ENCODE measurements at regions of chr2 and their contacts with region 1.

Region 1: DNA sequence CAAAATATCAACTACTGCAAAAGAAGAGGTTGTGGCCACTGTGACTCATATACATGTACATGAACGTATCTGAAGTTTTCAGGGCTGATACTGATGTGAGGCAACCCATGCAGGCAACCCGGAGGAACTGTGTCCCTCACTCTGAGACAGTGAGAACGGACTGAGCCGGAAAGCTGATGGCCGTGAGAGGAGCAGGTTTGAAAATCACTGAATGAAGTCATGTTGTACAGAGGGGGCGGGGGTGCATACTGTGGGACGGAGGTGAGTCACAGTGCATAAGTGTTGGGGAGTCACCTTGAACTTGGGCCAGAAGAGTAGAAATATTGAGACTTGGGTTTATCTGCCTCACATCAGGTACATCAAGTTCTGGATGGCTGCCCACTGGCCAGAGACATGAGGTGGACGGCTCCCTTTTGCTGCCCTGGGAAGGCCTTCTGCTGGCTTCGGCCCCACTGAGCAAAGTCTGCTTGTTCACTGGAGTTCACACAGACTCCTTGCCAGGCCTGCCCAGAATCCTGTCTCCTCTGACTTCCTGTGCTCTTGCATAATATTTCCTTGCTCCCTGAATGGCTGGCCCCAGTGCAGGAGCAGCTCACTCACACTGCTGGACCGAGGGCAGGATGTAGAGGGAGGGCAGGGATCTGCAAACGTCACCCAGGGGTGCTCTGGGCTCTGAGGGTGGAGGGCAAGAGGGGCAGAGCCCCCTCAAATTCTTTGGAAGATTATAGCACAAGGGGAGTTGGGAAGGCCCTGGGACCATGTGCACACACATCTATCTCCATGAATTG is 18.1 kb downstream of the EPAS1 start:
- DNase-seq: peak; percentile 85 to 98
- H3K4me3 ChIP-seq: no peak overlapping the region
- H3K27ac ChIP-seq: peak overlapping the region; percentile 94 to 95
- H3K4me1 ChIP-seq: peaks cover 25 to 68% of the 10 kb centered on the region in 2 donors
- H3K27me3 ChIP-seq: no peaks in the 10 kb centered on the region
- CTCF ChIP-seq: no peak

Region 2: DNA sequence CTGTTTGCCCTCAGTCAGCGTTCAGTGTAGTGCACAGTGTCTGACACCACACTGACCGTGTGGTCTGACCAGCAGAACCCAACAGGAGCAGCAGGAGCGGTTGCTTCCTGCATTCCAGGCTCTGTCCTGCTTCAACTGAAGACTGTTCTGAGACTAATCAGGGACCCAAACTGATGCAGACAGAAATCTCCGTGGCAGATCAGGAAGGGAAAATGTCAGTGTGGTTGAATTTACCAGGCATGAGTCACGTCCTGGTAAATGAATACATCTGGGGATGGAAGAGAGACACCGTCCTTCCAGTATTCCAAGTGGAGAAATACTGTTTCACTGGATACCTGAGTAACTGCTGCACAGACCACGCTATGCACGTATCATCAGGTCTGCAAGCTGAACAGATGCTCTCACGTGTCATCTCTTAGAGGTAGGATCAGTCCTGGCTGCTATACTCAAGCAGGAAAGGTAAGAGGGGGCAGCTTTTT is 241.7 kb before region 1 on chr2:
- intact Hi-C with region 1: no loop called
- DNase-seq: no peak
- H3K4me3 ChIP-seq: no peak overlapping the region
- H3K27ac ChIP-seq: no peak overlapping the region
- H3K4me1 ChIP-seq: no peaks in the 10 kb centered on the region
- H3K27me3 ChIP-seq: no peaks in the 10 kb centered on the region
- CTCF ChIP-seq: no peak

Region 3: DNA sequence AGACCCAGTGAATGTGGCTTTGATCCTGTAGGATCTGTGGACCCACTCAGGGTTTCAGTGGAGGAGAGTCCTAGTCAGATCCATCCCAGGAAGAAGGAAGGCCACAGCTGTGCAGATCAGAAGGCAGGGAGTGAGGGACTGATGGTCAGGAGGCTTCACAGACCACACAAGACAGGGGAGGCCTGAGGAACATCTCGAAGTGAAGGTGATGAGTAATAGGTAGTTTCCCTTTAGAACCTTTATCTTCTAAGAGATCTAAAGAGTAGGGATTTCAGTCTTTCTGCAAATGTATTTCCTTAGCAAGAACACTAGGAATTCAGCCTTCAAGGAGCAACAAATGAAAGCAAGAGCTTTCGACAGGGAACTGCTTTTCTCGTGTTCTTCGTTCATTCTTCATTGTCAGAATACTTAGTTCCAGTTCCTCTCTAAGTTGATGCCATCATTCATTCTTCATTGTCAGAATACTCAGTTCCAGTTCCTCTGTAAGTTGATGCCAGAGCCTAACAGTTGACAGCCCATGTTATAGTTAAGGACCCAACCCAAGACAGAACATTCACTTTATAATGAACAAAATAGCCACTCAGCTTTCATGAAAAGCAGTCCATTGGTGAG is 168.3 kb before region 1 on chr2:
- intact Hi-C with region 1: no loop called
- DNase-seq: no peak
- H3K4me3 ChIP-seq: no peak overlapping the region
- H3K27ac ChIP-seq: no peak overlapping the region
- H3K4me1 ChIP-seq: peaks cover 0 to 4% of the 10 kb centered on the region in 2 donors
- H3K27me3 ChIP-seq: no peaks in the 10 kb centered on the region
- CTCF ChIP-seq: no peak

Region 4: GRCh38 chr2:46329803-46330775 is 14.8 kb after region 1 on chr2:
- intact Hi-C with region 1: loop called (anchors 1 kb)
- DNase-seq: no peak
- H3K4me3 ChIP-seq: no peak overlapping the region
- H3K27ac ChIP-seq: peak overlapping the region; percentile 86 to 92
- H3K4me1 ChIP-seq: peaks cover 16 to 76% of the 10 kb centered on the region in 2 donors
- H3K27me3 ChIP-seq: no peaks in the 10 kb centered on the region
- CTCF ChIP-seq: no peak

Region 5: DNA sequence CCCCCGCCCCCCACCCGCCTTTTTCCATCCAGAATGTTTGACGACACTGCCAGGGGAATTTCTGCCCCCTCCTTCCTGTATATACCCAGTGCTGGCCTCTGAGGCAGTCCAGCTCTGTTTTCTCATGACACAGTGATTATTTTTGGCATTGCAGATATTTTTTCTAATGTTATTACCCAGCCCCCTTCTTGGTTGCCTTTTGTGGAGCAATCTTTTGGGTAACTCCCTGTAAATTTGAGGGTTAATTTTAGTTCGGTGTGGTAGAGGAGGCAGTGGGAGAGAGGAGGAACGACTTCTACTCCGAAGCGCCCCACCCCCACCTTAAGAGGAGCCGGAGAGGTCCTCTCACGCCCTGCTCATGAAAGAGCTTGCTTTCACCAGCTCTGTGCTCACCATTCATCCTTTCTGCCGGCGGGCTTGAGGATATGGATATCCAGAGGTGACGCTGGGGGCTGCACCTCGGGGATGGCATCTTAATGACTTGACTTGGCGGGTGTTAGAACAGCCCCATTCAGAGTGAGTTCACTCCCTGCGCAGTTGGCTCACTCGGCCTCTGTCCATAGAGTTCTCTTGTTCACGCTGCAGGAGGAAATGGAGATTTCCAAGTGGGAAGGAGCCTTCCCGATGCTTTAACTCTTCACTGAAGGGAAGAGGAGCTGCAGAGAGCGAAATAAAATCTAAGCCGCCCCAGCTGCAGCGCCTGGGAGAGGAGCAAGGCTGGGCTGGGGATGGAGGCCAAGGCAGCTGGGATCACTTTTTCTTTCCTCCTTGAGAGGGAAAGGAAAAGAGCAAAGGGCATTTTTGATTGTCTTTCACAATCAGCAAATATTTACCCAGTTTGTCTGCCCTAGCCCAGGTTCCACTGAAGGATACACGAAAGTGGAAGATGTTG is 20.3 kb after region 1 on chr2:
- intact Hi-C with region 1: loop called (anchors 1 kb)
- DNase-seq: peak in 1 of 2 donors; percentile 83
- H3K4me3 ChIP-seq: peak overlapping the region; percentile 42 to 55
- H3K27ac ChIP-seq: peak overlapping the region; percentile 86 to 92
- H3K4me1 ChIP-seq: peaks cover 18 to 82% of the 10 kb centered on the region in 2 donors
- H3K27me3 ChIP-seq: no peaks in the 10 kb centered on the region
- CTCF ChIP-seq: peak in 1 of 3 experiments; percentile 4

Region 6: GRCh38 chr2:46569061-46569560 is 253.8 kb after region 1 on chr2:
- intact Hi-C with region 1: no loop called
- DNase-seq: no peak
- H3K4me3 ChIP-seq: peak overlapping the region; percentile 7
- H3K27ac ChIP-seq: peak overlapping the region; percentile 56 to 73
- H3K4me1 ChIP-seq: peaks cover 20 to 52% of the 10 kb centered on the region in 2 donors
- H3K27me3 ChIP-seq: no peaks in the 10 kb centered on the region
- CTCF ChIP-seq: no peak

Measured in ascending aorta (tissue), 2 donors.